Adrenal gland (tissue), 19 donors: ENCODE measurements at regions of chr19 and their contacts with region 1.

Region 1: GRCh38 chr19:36132489-36132891 is 7.4 kb upstream of the CAPNS1 start:
- DNase-seq: peak in 2 of 7 donors; percentile 21 to 39
- H3K4me3 ChIP-seq: no peak overlapping the region
- H3K27ac ChIP-seq: no peak overlapping the region
- H3K4me1 ChIP-seq: peaks cover 12 to 18% of the 10 kb centered on the region in 2 donors
- H3K27me3 ChIP-seq: no peaks in the 10 kb centered on the region
- CTCF ChIP-seq: no peak
- POLR2A ChIP-seq: no peak

Region 2: GRCh38 chr19:36169084-36169760 is 36.7 kb after region 1 on chr19:
- intact Hi-C with region 1: loop called (anchors 2 to 5 kb)
- DNase-seq: peak in 4 of 7 donors; percentile 28 to 73 (median 31)
- H3K4me3 ChIP-seq: no peak overlapping the region
- H3K27ac ChIP-seq: peak overlapping the region in 2 of 5 donors; percentile 24 to 47
- H3K4me1 ChIP-seq: no peaks in the 10 kb centered on the region
- H3K27me3 ChIP-seq: no peaks in the 10 kb centered on the region
- CTCF ChIP-seq: no peak
- POLR2A ChIP-seq: no peak